ENCODE measurements at regions of chr2 and their contacts with region 1.

Region 1: GRCh38 chr2:39107719-39108273 is 13.1 kb downstream of the SOS1 start:
- DNase-seq: no peak
- H3K4me3 ChIP-seq: no peak overlapping the region
- CTCF ChIP-seq: no peak

Region 2: GRCh38 chr2:39080152-39080551 is 27.6 kb before region 1 on chr2:
- CTCF ChIA-PET with region 1: no interaction called
- POLR2A ChIA-PET with region 1: no interaction called
- DNase-seq: no peak
- H3K4me3 ChIP-seq: no peak overlapping the region
- CTCF ChIP-seq: no peak

Region 3: DNA sequence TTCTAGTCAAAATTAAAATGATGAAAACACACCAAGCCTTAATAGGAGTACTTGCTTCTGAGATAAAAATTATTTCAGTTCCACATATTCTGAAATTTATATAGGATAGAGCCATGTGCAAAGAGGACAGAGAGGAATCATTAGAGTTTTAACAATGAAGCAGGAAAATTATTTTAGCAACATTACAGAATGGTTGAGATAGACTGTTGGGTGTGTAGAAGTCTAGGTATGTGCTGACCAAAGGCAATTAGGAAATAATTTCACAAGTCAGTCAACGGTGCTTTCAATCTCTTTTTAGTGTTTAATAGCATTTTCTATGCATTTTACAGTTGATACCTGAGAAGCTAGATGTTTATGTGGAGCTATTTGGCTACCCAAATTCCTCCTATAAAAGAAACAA is 12.2 kb before region 1 on chr2:
- CTCF ChIA-PET with region 1: interaction called, 10 read pairs
- POLR2A ChIA-PET with region 1: no interaction called
- DNase-seq: no peak
- H3K4me3 ChIP-seq: no peak overlapping the region
- CTCF ChIP-seq: no peak

Measured in AG04449 (cell line).